ENCODE measurements at regions of chr1 and their contacts with region 1.

Region 1: GRCh38 chr1:3618881-3619671 is 5.7 kb upstream of the TPRG1L start:
- H3K4me3 Mint-ChIP-seq: no peak overlapping the region
- H3K27ac Mint-ChIP-seq: no peak overlapping the region
- H3K4me1 Mint-ChIP-seq: peaks cover 32% of the 10 kb centered on the region
- H3K27me3 Mint-ChIP-seq: peaks cover 22% of the 10 kb centered on the region

Region 2: GRCh38 chr1:3491291-3492246 is 127.5 kb before region 1 on chr1:
- intact Hi-C with region 1: loop called (anchors 1 kb)
- H3K4me3 Mint-ChIP-seq: no peak overlapping the region
- H3K27ac Mint-ChIP-seq: no peak overlapping the region
- H3K4me1 Mint-ChIP-seq: peaks cover 7% of the 10 kb centered on the region
- H3K27me3 Mint-ChIP-seq: no peaks in the 10 kb centered on the region

Region 3: GRCh38 chr1:3564921-3565827 is 53.9 kb before region 1 on chr1:
- intact Hi-C with region 1: loop called (anchors 1 kb)
- H3K4me3 Mint-ChIP-seq: no peak overlapping the region
- H3K27ac Mint-ChIP-seq: no peak overlapping the region
- H3K4me1 Mint-ChIP-seq: no peaks in the 10 kb centered on the region
- H3K27me3 Mint-ChIP-seq: no peaks in the 10 kb centered on the region

Region 4: GRCh38 chr1:3593745-3594144 is 25.3 kb before region 1 on chr1:
- intact Hi-C with region 1: loop called (anchors 1 kb)
- H3K4me3 Mint-ChIP-seq: no peak overlapping the region
- H3K27ac Mint-ChIP-seq: peak overlapping the region; percentile 8
- H3K4me1 Mint-ChIP-seq: peaks cover 27% of the 10 kb centered on the region
- H3K27me3 Mint-ChIP-seq: peaks cover 16% of the 10 kb centered on the region

Measured in dendritic cell treated with granulocyte-macrophage colony-stimulating factor and Interleukin-4, amounts not matched to agents 40 ng/mL and 50 ng/mL, for 4 days (primary cell).